ENCODE measurements at regions of chr3 and their contacts with region 1.

Region 1: GRCh38 chr3:50321336-50322114 is 1.0 kb downstream of the HYAL2 start:
- DNase-seq: peak in 1 of 2 donors; percentile 94
- H3K4me3 ChIP-seq: peak overlapping the region; percentile 66 to 81
- H3K27ac ChIP-seq: peak overlapping the region; percentile 92 to 93
- H3K4me1 ChIP-seq: peaks cover 8 to 28% of the 10 kb centered on the region in 2 donors
- H3K27me3 ChIP-seq: no peaks in the 10 kb centered on the region
- CTCF ChIP-seq: peak; percentile 26 to 63 (median 44)

Region 2: DNA sequence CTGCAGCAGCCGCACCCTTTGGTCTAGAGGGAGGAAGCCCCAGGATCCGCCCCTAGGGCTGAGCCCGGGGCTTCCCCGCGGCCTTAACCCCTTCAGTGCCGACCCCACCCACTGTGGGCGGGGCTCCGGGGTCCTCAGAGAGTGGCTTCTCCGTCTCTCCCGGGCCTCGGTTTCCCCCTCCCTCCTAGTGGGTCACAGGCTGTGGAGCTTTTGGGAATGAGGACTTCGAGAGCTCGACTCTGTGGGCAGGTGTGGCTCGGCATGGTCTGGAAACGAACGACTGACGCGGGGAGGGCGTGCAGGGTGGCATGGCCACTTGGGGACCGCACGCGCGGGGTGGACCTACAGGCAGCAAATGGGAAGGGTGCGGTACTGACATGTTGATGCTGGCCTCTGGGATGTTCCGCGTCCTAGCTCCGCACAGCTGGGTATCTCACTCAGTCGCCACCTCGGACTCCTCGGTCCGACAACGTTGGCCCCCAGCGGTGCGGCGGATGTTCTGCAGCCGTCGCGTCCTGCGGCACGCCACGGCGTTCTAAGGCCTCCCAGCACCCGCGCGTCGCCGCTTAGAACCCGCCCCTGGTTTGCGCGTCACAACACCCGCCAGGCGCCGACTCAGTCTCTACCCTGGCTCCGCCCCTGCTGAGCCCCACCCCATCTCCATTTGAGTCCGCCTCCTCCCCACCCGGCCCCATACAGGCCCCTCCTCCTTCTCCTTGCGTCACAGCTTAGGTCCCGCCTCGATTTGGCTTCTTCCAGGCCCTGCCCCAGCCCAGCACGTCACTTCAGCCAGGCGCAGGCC is 22.5 kb before region 1 on chr3 and contains the starts of genes HYAL3 and NAA80:
- intact Hi-C with region 1: loop called (anchors 1 kb)
- DNase-seq: peak; percentile 96 to 100
- H3K4me3 ChIP-seq: peak within 1 kb of the TSS; percentile 85 to 89
- H3K27ac ChIP-seq: peak within 1 kb of the TSS; percentile 90 to 91
- H3K4me1 ChIP-seq: peaks cover 13 to 19% of the 10 kb centered on the region in 2 donors
- H3K27me3 ChIP-seq: no peaks in the 10 kb centered on the region
- CTCF ChIP-seq: peak; percentile 30 to 58 (median 39)
- total RNA-seq, gene HYAL3: not detected
- total RNA-seq, gene NAA80: 38.8 TPM

Measured in ascending aorta (tissue), 2 donors.